Left ventricle myocardium superior (tissue), 1 donor: ENCODE measurements at regions of chr14 and their contacts with region 1.

Region 1: GRCh38 chr14:22822571-22823098 is 7.1 kb upstream of the MRPL52 start:
- DNase-seq: peak; percentile 87
- ATAC-seq: peak; percentile 88

Region 2: GRCh38 chr14:22852940-22853767 is 30.5 kb after region 1 on chr14:
- intact Hi-C with region 1: loop called (anchors 2 kb)
- DNase-seq: peak; percentile 94
- ATAC-seq: peak; percentile 58

Region 3: GRCh38 chr14:22966783-22967269 is 144.2 kb after region 1 on chr14:
- intact Hi-C with region 1: no loop called
- DNase-seq: no peak
- ATAC-seq: no peak